SK-N-SH (cell line): ENCODE measurements at regions of chr15 and their contacts with region 1.

Region 1: DNA sequence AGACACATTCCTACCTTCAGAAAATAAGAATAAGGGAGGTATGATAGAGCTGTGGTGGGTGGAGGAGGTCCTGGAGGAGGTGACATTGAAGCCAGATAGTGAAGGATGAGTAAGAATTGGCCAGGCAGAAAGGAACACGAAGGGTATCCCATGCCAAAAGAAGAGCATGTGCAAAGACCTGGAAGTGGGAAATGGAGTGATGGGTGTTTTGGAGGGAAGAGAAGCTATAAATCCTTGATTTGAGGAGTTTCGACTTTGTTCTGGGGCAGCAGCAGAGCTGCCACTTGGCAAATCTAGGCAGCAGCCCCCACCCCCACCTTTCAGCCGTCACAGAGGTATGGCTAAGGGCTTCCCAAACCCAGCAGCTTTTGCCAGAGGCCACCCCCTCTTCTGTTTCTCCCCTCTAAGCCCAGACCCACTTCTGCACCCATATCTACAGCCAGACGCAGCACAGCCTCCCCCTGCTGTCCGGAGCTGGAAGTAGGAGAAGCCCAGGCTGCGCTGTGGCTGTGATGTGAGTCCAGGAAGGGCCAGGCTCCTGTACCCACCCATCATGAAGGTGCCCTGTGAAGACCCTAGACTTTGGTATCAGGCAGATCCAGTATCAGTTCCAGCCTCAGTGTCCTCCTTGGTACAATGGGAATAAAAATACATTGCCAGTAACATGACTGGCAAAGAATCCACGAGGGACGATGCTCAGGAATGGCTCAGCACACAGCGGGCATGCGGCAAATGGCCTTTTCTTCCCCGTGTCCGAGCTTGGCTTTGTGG is 188.7 kb upstream of the LINGO1 start:
- DNase-seq: peak; percentile 88
- H3K4me3 ChIP-seq: no peak overlapping the region; a peak in 1 of 4 replicates
- H3K27ac ChIP-seq: no peak overlapping the region
- H3K4me1 ChIP-seq: peaks cover 0 to 17% of the 10 kb centered on the region in 2 experiments; a peak in 1 of 4 replicates
- H3K27me3 ChIP-seq: peaks cover 38% of the 10 kb centered on the region
- CTCF ChIP-seq: peak; percentile 80
- EP300 ChIP-seq: no peak
- RAD21 ChIP-seq: peak; percentile 92

Region 2: DNA sequence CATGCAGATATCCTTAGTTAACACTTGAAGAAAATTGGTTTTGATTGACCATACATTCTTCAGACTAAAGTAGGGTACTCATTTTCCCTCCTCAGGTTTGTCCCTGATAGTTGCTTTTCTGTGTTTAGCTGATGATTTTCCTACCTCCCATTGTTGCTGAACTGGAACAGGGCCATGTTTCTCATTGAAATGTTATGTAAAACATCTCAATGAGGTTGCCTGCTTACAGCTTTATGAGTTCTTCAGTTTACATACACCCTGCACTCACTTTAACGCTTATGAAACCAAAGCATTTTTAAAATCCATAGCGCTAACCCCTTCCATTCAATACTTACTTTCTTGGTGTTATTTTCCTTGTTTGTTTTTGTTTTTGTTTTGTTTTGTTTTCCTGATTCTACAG is 338.8 kb before region 1 on chr15:
- CTCF ChIA-PET with region 1: no interaction called
- POLR2A ChIA-PET with region 1: no interaction called
- DNase-seq: no peak
- H3K4me3 ChIP-seq: no peak overlapping the region
- H3K27ac ChIP-seq: peak overlapping the region; percentile 53 to 74; a peak in 3 of 4 replicates
- H3K4me1 ChIP-seq: peaks cover 4 to 44% of the 10 kb centered on the region in 2 experiments
- H3K27me3 ChIP-seq: no peaks in the 10 kb centered on the region
- CTCF ChIP-seq: no peak
- EP300 ChIP-seq: peak in 1 of 2 experiments; percentile 42; a peak in 1 of 4 replicates
- RAD21 ChIP-seq: no peak

Region 3: GRCh38 chr15:77599899-77600298 is 221.5 kb before region 1 on chr15:
- CTCF ChIA-PET with region 1: interaction called, 13 read pairs
- POLR2A ChIA-PET with region 1: no interaction called
- DNase-seq: peak; percentile 68
- H3K4me3 ChIP-seq: no peak overlapping the region
- H3K27ac ChIP-seq: peak overlapping the region in 1 of 2 experiments; percentile 74; a peak in 1 of 4 replicates
- H3K4me1 ChIP-seq: peaks cover 0 to 62% of the 10 kb centered on the region in 2 experiments; a peak in 2 of 4 replicates
- H3K27me3 ChIP-seq: no peaks in the 10 kb centered on the region
- CTCF ChIP-seq: no peak
- EP300 ChIP-seq: no peak
- RAD21 ChIP-seq: no peak

Region 4: DNA sequence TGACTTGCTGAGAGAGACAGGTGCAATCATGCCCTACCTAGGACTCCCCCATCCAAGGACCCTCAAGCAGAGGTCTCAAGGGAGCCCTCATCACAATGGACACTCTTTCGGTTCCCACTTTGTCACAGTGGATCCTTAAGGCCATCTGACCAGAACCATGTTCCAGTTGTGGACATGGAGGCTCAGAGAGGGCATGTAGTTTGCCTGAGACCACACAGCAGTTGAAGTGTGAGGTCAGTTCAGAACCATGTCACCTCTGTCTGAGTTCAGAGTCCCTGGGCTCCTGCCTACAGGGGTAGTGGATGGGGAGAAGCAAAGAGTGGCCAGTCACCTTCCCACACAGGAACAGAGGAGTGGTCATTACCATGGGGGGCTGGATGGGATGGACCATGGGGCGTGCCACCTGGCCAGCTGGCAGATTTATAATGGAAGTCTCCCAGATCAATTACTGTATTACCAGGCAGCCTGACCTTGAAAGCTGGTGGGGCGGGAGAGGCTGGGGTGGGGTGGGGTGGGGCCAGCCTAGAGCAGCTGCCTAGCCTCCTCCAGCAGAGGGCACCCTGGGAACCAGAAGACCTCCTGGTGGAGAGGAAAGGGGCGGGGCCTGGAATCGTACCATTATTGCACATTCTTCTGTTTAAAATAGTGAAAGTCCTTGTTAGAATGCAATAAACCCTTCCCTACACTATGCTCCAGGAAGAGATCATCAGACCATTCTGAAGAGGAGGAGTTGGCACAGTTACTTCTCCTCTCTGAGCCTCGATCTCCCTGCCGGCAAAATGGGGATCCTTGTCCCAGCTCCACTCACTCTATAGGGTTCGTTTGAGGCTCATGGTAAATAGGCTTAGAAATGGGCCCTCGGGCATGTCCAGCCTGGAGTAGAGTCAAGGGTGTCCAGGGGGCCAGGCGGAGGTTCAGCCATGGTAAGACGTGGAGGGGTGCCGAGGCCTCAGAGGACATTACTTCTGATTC is 161.7 kb before region 1 on chr15:
- CTCF ChIA-PET with region 1: interaction called, 230 read pairs
- POLR2A ChIA-PET with region 1: no interaction called
- DNase-seq: peak; percentile 91
- H3K4me3 ChIP-seq: no peak overlapping the region
- H3K27ac ChIP-seq: no peak overlapping the region
- H3K4me1 ChIP-seq: peaks cover 0 to 8% of the 10 kb centered on the region in 2 experiments; a peak in 1 of 4 replicates
- H3K27me3 ChIP-seq: peaks cover 20% of the 10 kb centered on the region; the same call in 1 of the 2 replicates
- CTCF ChIP-seq: peak; percentile 46
- EP300 ChIP-seq: no peak
- RAD21 ChIP-seq: peak; percentile 67

Region 5: GRCh38 chr15:77747175-77748077 is 73.9 kb before region 1 on chr15:
- CTCF ChIA-PET with region 1: interaction called, 14 read pairs
- POLR2A ChIA-PET with region 1: no interaction called
- DNase-seq: peak; percentile 78
- H3K4me3 ChIP-seq: no peak overlapping the region
- H3K27ac ChIP-seq: peak overlapping the region in 1 of 2 experiments; percentile 62; a peak in 2 of 4 replicates
- H3K4me1 ChIP-seq: peaks cover 0 to 19% of the 10 kb centered on the region in 2 experiments; a peak in 1 of 4 replicates
- H3K27me3 ChIP-seq: peaks cover 4% of the 10 kb centered on the region; the same call in 1 of the 2 replicates
- CTCF ChIP-seq: no peak
- EP300 ChIP-seq: 0 out of 4 replicates have a peak, but pooled peaks of 1 of the 2 experiments have one; percentile 19
- RAD21 ChIP-seq: no peak

Region 6: GRCh38 chr15:77798151-77798835 is 23.1 kb before region 1 on chr15:
- CTCF ChIA-PET with region 1: interaction called, 12 read pairs
- POLR2A ChIA-PET with region 1: no interaction called
- DNase-seq: no peak
- H3K4me3 ChIP-seq: no peak overlapping the region
- H3K27ac ChIP-seq: no peak overlapping the region
- H3K4me1 ChIP-seq: peaks cover 0 to 3% of the 10 kb centered on the region in 2 experiments; a peak in 1 of 4 replicates
- H3K27me3 ChIP-seq: peaks cover 17% of the 10 kb centered on the region; the same call in 1 of the 2 replicates
- CTCF ChIP-seq: no peak
- EP300 ChIP-seq: no peak
- RAD21 ChIP-seq: no peak

Region 7: DNA sequence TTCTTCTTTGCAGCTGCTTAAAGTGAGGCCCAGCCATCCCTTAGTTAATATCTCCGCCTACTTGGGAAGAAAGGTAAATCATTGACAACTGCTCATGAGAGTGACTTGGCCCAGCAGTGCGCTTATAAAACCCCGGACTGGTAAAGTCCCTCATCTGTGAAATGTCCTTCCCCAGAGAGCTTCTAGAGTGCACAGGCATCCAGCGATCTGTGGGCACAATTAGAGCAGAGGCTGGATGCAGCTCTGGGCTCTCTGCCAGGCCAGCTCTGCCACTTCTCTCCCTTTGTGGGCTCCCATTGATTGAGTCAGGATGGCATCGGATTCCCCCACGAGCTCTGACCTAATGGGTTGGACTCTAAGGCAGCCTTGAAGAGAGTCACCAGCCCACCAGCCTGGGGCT is 30.3 kb after region 1 on chr15:
- CTCF ChIA-PET with region 1: interaction called, 15 read pairs
- POLR2A ChIA-PET with region 1: no interaction called
- DNase-seq: peak; percentile 81
- H3K4me3 ChIP-seq: no peak overlapping the region
- H3K27ac ChIP-seq: no peak overlapping the region
- H3K4me1 ChIP-seq: peaks cover 0 to 8% of the 10 kb centered on the region in 2 experiments; a peak in 1 of 4 replicates
- H3K27me3 ChIP-seq: peaks cover 43% of the 10 kb centered on the region; the same call in 1 of the 2 replicates
- CTCF ChIP-seq: no peak
- EP300 ChIP-seq: no peak
- RAD21 ChIP-seq: no peak